ENCODE measurements at regions of chr10 and their contacts with region 1.

Region 1: GRCh38 chr10:112314822-112315474 is 31.7 kb downstream of the TECTB start:
- DNase-seq: peak; percentile 75
- ATAC-seq: peak; percentile 58
- H3K4me3 ChIP-seq: no peak overlapping the region
- H3K4me3 Mint-ChIP-seq: no peak overlapping the region
- H3K27ac ChIP-seq: no peak overlapping the region
- H3K27ac Mint-ChIP-seq: no peak overlapping the region
- H3K4me1 ChIP-seq: no peaks in the 10 kb centered on the region
- H3K4me1 Mint-ChIP-seq: no peaks in the 10 kb centered on the region
- H3K27me3 ChIP-seq: peaks cover 0 to 5% (median 0%) of the 10 kb centered on the region in 4 experiments
- H3K27me3 Mint-ChIP-seq: peaks cover 31% of the 10 kb centered on the region
- CTCF ChIP-seq: peak; percentile 94

Region 2: GRCh38 chr10:112115799-112116385 is 199.1 kb before region 1 on chr10:
- CTCF ChIA-PET with region 1: interaction called, 4 read pairs
- POLR2A ChIA-PET with region 1: no interaction called
- intact Hi-C with region 1: loop called (anchors 1 kb)
- DNase-seq: peak; percentile 44
- ATAC-seq: no peak
- H3K4me3 ChIP-seq: no peak overlapping the region
- H3K4me3 Mint-ChIP-seq: no peak overlapping the region
- H3K27ac ChIP-seq: no peak overlapping the region
- H3K27ac Mint-ChIP-seq: no peak overlapping the region
- H3K4me1 ChIP-seq: no peaks in the 10 kb centered on the region
- H3K4me1 Mint-ChIP-seq: no peaks in the 10 kb centered on the region
- H3K27me3 ChIP-seq: peaks cover 0 to 6% (median 0%) of the 10 kb centered on the region in 4 experiments
- H3K27me3 Mint-ChIP-seq: no peaks in the 10 kb centered on the region
- CTCF ChIP-seq: peak; percentile 75

Region 3: GRCh38 chr10:112294169-112294568 is 20.8 kb before region 1 on chr10:
- CTCF ChIA-PET with region 1: interaction called, 10 read pairs
- POLR2A ChIA-PET with region 1: no interaction called
- intact Hi-C with region 1: no loop called
- DNase-seq: no peak
- ATAC-seq: no peak
- H3K4me3 ChIP-seq: no peak overlapping the region
- H3K4me3 Mint-ChIP-seq: no peak overlapping the region
- H3K27ac ChIP-seq: no peak overlapping the region
- H3K27ac Mint-ChIP-seq: no peak overlapping the region
- H3K4me1 ChIP-seq: no peaks in the 10 kb centered on the region
- H3K4me1 Mint-ChIP-seq: no peaks in the 10 kb centered on the region
- H3K27me3 ChIP-seq: no peaks in the 10 kb centered on the region
- H3K27me3 Mint-ChIP-seq: peaks cover 9% of the 10 kb centered on the region
- CTCF ChIP-seq: no peak

Region 4: GRCh38 chr10:112434988-112435619 is 120.2 kb after region 1 on chr10:
- CTCF ChIA-PET with region 1: interaction called, 4 read pairs
- POLR2A ChIA-PET with region 1: no interaction called
- intact Hi-C with region 1: loop called (anchors 10 kb)
- DNase-seq: peak; percentile 35
- ATAC-seq: no peak
- H3K4me3 ChIP-seq: no peak overlapping the region
- H3K4me3 Mint-ChIP-seq: no peak overlapping the region
- H3K27ac ChIP-seq: no peak overlapping the region
- H3K27ac Mint-ChIP-seq: no peak overlapping the region
- H3K4me1 ChIP-seq: no peaks in the 10 kb centered on the region
- H3K4me1 Mint-ChIP-seq: no peaks in the 10 kb centered on the region
- H3K27me3 ChIP-seq: no peaks in the 10 kb centered on the region
- H3K27me3 Mint-ChIP-seq: no peaks in the 10 kb centered on the region
- CTCF ChIP-seq: peak; percentile 59

Region 5: GRCh38 chr10:112471878-112472487 is 157.0 kb after region 1 on chr10:
- CTCF ChIA-PET with region 1: interaction called, 5 read pairs
- POLR2A ChIA-PET with region 1: no interaction called
- intact Hi-C with region 1: loop called (anchors 1 kb)
- DNase-seq: peak; percentile 54
- ATAC-seq: peak; percentile 47
- H3K4me3 ChIP-seq: no peak overlapping the region
- H3K4me3 Mint-ChIP-seq: no peak overlapping the region
- H3K27ac ChIP-seq: no peak overlapping the region
- H3K27ac Mint-ChIP-seq: peak overlapping the region; percentile 17
- H3K4me1 ChIP-seq: peaks cover 0 to 3% of the 10 kb centered on the region in 2 donors
- H3K4me1 Mint-ChIP-seq: peaks cover 4% of the 10 kb centered on the region
- H3K27me3 ChIP-seq: no peaks in the 10 kb centered on the region
- H3K27me3 Mint-ChIP-seq: no peaks in the 10 kb centered on the region
- CTCF ChIP-seq: peak; percentile 83

Region 6: GRCh38 chr10:112689299-112690072 is 374.5 kb after region 1 on chr10:
- CTCF ChIA-PET with region 1: no interaction called
- POLR2A ChIA-PET with region 1: no interaction called
- intact Hi-C with region 1: no loop called
- DNase-seq: no peak
- ATAC-seq: no peak
- H3K4me3 ChIP-seq: no peak overlapping the region
- H3K4me3 Mint-ChIP-seq: no peak overlapping the region
- H3K27ac ChIP-seq: no peak overlapping the region
- H3K27ac Mint-ChIP-seq: no peak overlapping the region
- H3K4me1 ChIP-seq: no peaks in the 10 kb centered on the region
- H3K4me1 Mint-ChIP-seq: no peaks in the 10 kb centered on the region
- H3K27me3 ChIP-seq: no peaks in the 10 kb centered on the region
- H3K27me3 Mint-ChIP-seq: no peaks in the 10 kb centered on the region
- CTCF ChIP-seq: no peak

Region 7: DNA sequence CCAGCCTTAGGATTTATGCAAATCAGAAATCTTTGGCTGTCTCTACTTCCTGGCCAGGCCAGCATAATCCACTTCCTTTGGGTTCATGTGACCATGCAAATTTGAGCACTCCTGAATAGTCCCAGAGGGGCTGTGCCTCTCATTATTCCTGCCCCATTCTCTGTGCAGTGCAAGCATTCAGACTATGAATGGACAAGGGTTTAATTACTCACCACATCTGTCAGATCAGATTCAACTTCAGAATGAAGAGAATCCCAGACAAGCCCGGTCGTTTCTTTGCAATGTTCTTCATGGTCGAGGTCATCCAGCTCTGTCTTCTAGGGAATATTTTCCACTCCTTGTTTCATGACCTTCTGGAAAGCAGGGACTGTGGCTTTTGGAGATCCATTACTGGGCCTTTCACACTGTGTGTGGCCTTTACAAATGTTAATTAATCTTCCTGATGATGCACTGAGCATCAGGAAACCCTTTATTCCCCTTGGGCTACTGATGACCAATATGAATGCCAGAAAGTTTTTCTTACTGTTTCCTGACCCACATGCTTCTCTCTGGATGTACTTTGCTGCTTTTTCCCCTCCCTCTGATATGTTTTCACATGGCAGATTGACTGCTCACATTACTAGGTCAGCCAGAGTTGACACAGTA is 417.5 kb after region 1 on chr10:
- CTCF ChIA-PET with region 1: no interaction called
- POLR2A ChIA-PET with region 1: no interaction called
- intact Hi-C with region 1: no loop called
- DNase-seq: no peak
- ATAC-seq: no peak
- H3K4me3 ChIP-seq: no peak overlapping the region
- H3K4me3 Mint-ChIP-seq: no peak overlapping the region
- H3K27ac ChIP-seq: no peak overlapping the region
- H3K27ac Mint-ChIP-seq: no peak overlapping the region
- H3K4me1 ChIP-seq: no peaks in the 10 kb centered on the region
- H3K4me1 Mint-ChIP-seq: peaks cover 6% of the 10 kb centered on the region
- H3K27me3 ChIP-seq: no peaks in the 10 kb centered on the region
- H3K27me3 Mint-ChIP-seq: no peaks in the 10 kb centered on the region
- CTCF ChIP-seq: no peak